ENCODE measurements at regions of chr20 and their contacts with region 1.

Region 1: DNA sequence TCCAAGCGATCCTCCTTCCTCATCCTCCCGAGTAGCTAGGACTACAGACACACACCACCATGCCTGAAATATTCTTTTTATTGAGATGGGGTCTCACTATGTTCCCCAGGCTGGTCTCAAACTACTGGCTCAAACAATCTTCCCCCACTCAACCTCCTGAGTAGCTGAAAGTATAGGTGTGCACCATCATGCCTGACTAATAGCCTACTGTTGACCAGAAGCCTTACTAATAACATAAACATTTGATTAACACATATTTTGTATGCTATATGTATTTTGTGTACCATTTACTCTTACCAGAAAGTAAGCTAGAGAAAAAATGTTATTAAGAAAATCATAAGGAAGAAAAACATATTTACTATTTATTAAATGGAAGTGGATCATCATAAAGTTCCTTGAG is 11.9 kb upstream of the WFDC10A start:
- DNase-seq: no peak
- H3K4me3 ChIP-seq: no peak overlapping the region
- CTCF ChIP-seq: no peak

Region 2: DNA sequence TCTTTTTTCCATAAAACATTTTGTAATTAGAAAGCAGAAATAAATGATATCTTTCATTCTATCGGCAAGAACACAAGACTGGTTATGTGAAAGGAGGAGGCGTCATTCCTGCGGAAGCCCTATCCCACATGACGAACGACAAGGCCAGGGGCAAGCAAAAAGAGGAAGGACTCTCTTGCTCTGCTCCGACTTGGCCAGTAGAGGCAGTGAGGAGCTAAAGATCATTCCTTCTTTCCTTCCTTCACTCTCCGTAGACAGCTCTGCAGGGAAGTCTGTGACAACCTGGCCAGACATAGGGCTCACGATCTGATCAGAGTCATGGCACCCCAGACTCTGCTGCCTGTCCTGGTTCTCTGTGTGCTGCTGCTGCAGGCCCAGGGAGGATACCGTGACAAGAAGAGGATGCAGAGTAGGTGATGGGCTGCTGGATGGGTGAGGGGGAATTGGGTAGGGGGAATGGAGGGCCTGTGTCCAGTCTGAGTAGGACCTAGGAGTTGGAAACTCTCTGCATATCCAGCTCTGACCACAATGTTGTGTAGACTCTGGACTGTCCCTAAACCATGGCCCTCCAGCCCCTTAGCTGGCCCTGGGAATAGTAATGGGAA is 12.0 kb after region 1 on chr20 and contains the start of gene WFDC10A:
- CTCF ChIA-PET with region 1: interaction called, 16 read pairs
- POLR2A ChIA-PET with region 1: no interaction called
- DNase-seq: no peak
- H3K4me3 ChIP-seq: no peak within 1 kb of the TSS
- CTCF ChIP-seq: peak; percentile 81

Measured in AG04449 (cell line).